Activated CD8-positive, alpha-beta memory T cell treated with anti-CD3 and anti-CD28 coated beads, Interleukin-2, amount 10 ng/mL, durations not matched to agents 7 days and 5 days (primary cell): ENCODE measurements at regions of chr1 and their contacts with region 1.

Region 1: GRCh38 chr1:27940297-27940696 is 5.5 kb downstream of the SMPDL3B start:
- DNase-seq: peak; percentile 81
- ATAC-seq: peak; percentile 75
- H3K4me3 Mint-ChIP-seq: no peak overlapping the region
- H3K27ac Mint-ChIP-seq: peak overlapping the region; percentile 53
- H3K4me1 Mint-ChIP-seq: peaks cover 38% of the 10 kb centered on the region
- H3K27me3 Mint-ChIP-seq: peaks cover 2% of the 10 kb centered on the region

Region 2: DNA sequence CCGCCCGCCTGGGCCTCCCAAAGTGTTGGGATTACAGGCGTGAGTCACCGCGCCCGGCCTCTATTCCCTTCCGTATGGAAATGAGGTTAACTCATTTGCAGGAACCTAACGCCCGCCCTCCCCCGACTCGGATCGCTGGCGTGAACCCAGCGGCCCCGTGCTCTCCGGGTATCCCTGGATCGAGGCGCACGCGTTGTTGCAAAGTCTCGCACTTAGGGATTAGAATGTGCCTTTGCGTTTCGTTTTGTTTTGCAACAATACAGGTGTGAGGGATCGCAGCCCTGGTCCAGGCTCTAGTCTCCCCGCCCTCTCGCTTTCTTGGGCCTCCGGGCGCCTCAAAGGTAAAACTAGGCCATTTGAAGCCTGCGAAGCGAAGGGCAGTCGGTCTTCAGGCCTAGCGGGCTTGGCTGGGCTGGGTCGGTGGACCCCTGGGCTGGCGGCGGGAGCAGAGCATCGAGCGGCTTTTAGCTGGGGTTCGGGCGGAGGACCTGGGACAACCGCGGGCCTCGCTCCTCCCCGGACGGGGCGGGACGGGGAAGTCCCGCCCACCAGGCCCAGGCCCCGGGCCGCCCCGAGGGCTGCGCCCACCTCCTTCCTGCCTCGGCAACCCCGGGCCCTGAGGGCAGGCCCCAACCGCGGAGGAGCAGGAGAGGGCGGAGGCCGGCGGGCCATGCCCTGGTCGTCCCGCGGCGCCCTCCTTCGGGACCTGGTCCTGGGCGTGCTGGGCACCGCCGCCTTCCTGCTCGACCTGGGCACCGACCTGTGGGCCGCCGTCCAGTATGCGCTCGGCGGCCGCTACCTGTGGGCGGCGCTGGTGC is 19.3 kb after region 1 on chr1 and contains the start of gene XKR8:
- CTCF ChIA-PET with region 1: interaction called, 12 read pairs
- DNase-seq: peak; percentile 88
- ATAC-seq: peak; percentile 99
- H3K4me3 Mint-ChIP-seq: peak within 1 kb of the TSS; percentile 77
- H3K27ac Mint-ChIP-seq: peak within 1 kb of the TSS; percentile 80
- H3K4me1 Mint-ChIP-seq: peaks cover 21% of the 10 kb centered on the region
- H3K27me3 Mint-ChIP-seq: no peaks in the 10 kb centered on the region
- total RNA-seq, gene XKR8: 5.2 to 6.6 TPM

Region 3: DNA sequence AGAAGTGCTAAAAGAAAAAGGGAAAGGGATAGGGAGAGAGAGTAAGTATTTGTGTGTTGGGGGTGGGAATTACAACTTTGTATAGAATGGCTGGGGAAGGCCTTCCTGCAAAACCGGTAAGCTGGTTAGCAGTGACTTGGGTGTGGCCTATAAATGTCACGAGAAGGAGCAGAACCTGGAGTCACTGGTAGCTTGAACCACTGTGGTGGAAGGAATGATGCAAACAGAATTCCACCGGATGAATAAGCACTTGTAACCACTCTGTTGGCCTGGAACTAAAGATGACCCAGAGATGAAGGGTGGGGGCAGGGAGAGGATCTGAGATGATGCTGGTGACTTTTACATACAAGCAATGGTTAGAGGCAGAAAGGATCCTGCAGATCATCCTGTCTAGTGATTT is 28.4 kb after region 1 on chr1:
- CTCF ChIA-PET with region 1: interaction called, 10 read pairs
- DNase-seq: no peak
- ATAC-seq: no peak
- H3K4me3 Mint-ChIP-seq: no peak overlapping the region
- H3K27ac Mint-ChIP-seq: peak overlapping the region; percentile 53
- H3K4me1 Mint-ChIP-seq: peaks cover 17% of the 10 kb centered on the region
- H3K27me3 Mint-ChIP-seq: no peaks in the 10 kb centered on the region

Region 4: DNA sequence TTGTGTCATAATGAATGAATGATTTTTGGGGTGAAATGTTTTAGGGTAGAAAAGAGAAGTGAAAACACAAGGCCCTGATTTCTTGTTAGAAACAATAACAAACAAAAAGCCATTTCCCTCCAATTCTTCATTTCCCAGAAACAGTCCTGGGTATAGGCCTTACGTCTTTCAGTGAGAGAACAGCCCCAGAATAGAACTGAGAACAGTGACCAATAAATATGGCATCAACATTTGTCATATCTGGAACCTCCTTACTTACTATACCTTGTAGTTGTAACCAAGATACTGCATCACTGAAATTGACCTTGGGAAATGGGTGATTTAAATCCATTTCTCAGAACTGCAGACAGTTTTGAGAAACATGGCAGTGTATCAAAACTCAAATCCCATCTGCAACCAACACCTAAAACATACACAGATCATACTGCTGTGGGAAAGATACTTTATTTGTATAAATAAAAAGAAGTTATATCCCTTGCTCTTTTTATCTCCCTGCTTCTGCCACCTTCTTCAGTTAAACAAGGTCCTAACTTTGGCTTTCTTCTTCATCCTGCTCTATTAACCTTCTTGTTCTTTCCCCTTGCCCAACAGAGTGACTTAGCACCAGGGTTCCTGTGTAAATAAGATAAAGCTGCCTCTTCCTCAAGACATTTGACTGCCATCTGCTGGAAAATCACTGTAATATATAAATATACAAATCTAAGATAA is 39.0 kb after region 1 on chr1:
- CTCF ChIA-PET with region 1: interaction called, 25 read pairs
- DNase-seq: no peak
- ATAC-seq: peak; percentile 73
- H3K4me3 Mint-ChIP-seq: no peak overlapping the region
- H3K27ac Mint-ChIP-seq: no peak overlapping the region
- H3K4me1 Mint-ChIP-seq: peaks cover 4% of the 10 kb centered on the region
- H3K27me3 Mint-ChIP-seq: no peaks in the 10 kb centered on the region